Natural killer cell (primary cell): ENCODE measurements at regions of chr2 and their contacts with region 1.

Region 1: GRCh38 chr2:46179037-46179652 is 118.1 kb upstream of the EPAS1 start:
- DNase-seq: peak; percentile 61 to 85
- ATAC-seq: peak; percentile 82 to 93 (median 91)
- H3K4me3 ChIP-seq: no peak overlapping the region
- H3K4me3 Mint-ChIP-seq: peak overlapping the region; percentile 21
- H3K27ac ChIP-seq: peak overlapping the region; percentile 46
- H3K27ac Mint-ChIP-seq: peak overlapping the region; percentile 71 to 87
- H3K4me1 ChIP-seq: peaks cover 25% of the 10 kb centered on the region
- H3K4me1 Mint-ChIP-seq: peaks cover 45 to 58% of the 10 kb centered on the region in 2 donors
- H3K27me3 ChIP-seq: no peaks in the 10 kb centered on the region
- H3K27me3 Mint-ChIP-seq: no peaks in the 10 kb centered on the region
- CTCF ChIP-seq: no peak

Region 2: GRCh38 chr2:46146891-46147502 is 32.1 kb before region 1 on chr2:
- intact Hi-C with region 1: loop called (anchors 1 kb)
- DNase-seq: no peak
- ATAC-seq: no peak
- H3K4me3 ChIP-seq: no peak overlapping the region
- H3K4me3 Mint-ChIP-seq: no peak overlapping the region
- H3K27ac ChIP-seq: no peak overlapping the region
- H3K27ac Mint-ChIP-seq: no peak overlapping the region
- H3K4me1 ChIP-seq: peaks cover 14% of the 10 kb centered on the region
- H3K4me1 Mint-ChIP-seq: peaks cover 17 to 29% of the 10 kb centered on the region in 2 donors
- H3K27me3 ChIP-seq: no peaks in the 10 kb centered on the region
- H3K27me3 Mint-ChIP-seq: no peaks in the 10 kb centered on the region
- CTCF ChIP-seq: no peak

Region 3: DNA sequence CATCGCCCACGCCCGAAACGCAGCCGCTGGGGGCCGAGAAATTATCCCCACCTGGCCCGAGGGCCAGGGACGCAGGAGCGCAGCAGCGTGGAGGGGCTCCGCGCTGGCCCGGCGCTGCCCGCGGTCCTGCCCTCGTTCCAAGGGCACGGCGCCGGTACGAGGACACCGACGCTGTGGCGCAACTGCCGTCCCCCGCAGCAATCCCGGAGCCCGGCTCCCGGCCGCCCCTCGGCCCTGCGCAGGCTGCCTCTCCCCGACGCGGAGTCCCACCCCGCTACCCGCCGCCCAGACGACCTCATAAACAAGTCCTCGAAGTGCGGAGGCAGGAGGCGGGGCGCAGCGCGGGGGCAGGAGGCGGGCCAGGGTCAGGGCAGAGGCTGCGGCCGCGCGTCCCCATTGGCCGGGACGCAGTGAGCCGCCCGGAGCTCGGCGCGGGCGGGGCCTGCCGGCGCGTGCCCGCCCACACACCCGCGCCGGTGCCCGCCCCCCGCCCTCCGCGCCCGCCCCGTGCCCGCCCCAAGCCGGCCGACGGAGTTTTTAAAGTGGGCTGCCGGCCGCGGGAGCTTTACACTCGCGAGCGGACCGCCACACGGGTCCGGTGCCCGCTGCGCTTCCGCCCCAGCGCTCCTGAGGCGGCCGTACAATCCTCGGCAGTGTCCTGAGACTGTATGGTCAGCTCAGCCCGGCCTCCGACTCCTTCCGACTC is 117.8 kb after region 1 on chr2 and contains the start of gene EPAS1:
- intact Hi-C with region 1: loop called (anchors 5 kb)
- DNase-seq: peak; percentile 76 to 87
- ATAC-seq: peak; percentile 92 to 95 (median 94)
- H3K4me3 ChIP-seq: peak within 1 kb of the TSS; percentile 90
- H3K4me3 Mint-ChIP-seq: peak within 1 kb of the TSS; percentile 94
- H3K27ac ChIP-seq: peak within 1 kb of the TSS; percentile 24
- H3K27ac Mint-ChIP-seq: peak within 1 kb of the TSS in 1 of 2 donors; percentile 81
- H3K4me1 ChIP-seq: peaks cover 33% of the 10 kb centered on the region
- H3K4me1 Mint-ChIP-seq: peaks cover 26 to 33% of the 10 kb centered on the region in 2 donors
- H3K27me3 ChIP-seq: peaks cover 41% of the 10 kb centered on the region
- H3K27me3 Mint-ChIP-seq: peaks cover 45 to 46% of the 10 kb centered on the region in 2 donors
- CTCF ChIP-seq: no peak
- total RNA-seq, gene EPAS1: 2.1 to 61.4 (median 3.6) TPM

Region 4: GRCh38 chr2:46803911-46804670 is 624.9 kb after region 1 on chr2:
- intact Hi-C with region 1: no loop called
- DNase-seq: no peak
- ATAC-seq: no peak
- H3K4me3 ChIP-seq: no peak overlapping the region
- H3K4me3 Mint-ChIP-seq: no peak overlapping the region
- H3K27ac ChIP-seq: no peak overlapping the region
- H3K27ac Mint-ChIP-seq: no peak overlapping the region
- H3K4me1 ChIP-seq: no peaks in the 10 kb centered on the region
- H3K4me1 Mint-ChIP-seq: no peaks in the 10 kb centered on the region
- H3K27me3 ChIP-seq: no peaks in the 10 kb centered on the region
- H3K27me3 Mint-ChIP-seq: peaks cover 10 to 19% of the 10 kb centered on the region in 2 donors
- CTCF ChIP-seq: no peak